ENCODE measurements at regions of chr12 and their contacts with region 1.

Region 1: DNA sequence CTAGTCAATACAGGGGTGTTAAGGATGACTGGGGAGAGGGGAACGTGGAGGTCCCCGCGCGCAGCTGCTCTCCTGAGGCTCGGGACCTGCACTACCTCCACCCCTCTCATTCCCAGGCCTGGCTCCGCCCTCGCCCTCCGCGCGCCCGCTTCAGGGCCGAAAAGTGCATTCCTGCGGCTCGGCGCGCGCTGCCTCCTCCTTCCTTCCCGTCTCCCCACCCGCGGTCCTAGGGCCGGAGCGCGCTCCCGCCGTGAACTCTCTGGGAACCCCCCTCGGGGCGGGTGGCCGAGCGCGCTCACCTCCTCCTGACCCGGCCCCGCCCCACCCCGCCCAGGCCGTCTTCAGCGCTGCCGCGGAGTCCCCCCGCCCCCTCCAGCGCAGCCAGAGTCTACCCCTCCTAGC is 11.2 kb downstream of the RARG start:
- DNase-seq: peak; percentile 60 to 85 (median 65)
- H3K4me3 ChIP-seq: peak overlapping the region; percentile 73 to 82
- H3K4me3 Mint-ChIP-seq: peak overlapping the region; percentile 95 to 99 (median 98)
- H3K27ac ChIP-seq: peak overlapping the region; percentile 98
- H3K27ac Mint-ChIP-seq: peak overlapping the region; percentile 93 to 99 (median 97)
- H3K4me1 ChIP-seq: peaks cover 78% of the 10 kb centered on the region
- H3K4me1 Mint-ChIP-seq: peaks cover 63 to 93% (median 72%) of the 10 kb centered on the region in 4 donors
- H3K27me3 ChIP-seq: no peaks in the 10 kb centered on the region
- H3K27me3 Mint-ChIP-seq: no peaks in the 10 kb centered on the region

Region 2: GRCh38 chr12:53200458-53201176 is 20.2 kb before region 1 on chr12:
- CTCF ChIA-PET with region 1: interaction called, 4 read pairs
- POLR2A ChIA-PET with region 1: interaction called, 175 read pairs
- intact Hi-C with region 1: no loop called
- DNase-seq: no peak
- H3K4me3 ChIP-seq: peak overlapping the region; percentile 12 to 29
- H3K4me3 Mint-ChIP-seq: peak overlapping the region; percentile 66 to 89 (median 73)
- H3K27ac ChIP-seq: peak overlapping the region; percentile 41
- H3K27ac Mint-ChIP-seq: peak overlapping the region; percentile 73 to 95 (median 86)
- H3K4me1 ChIP-seq: peaks cover 95% of the 10 kb centered on the region
- H3K4me1 Mint-ChIP-seq: peaks cover 48 to 84% (median 66%) of the 10 kb centered on the region in 4 donors
- H3K27me3 ChIP-seq: no peaks in the 10 kb centered on the region
- H3K27me3 Mint-ChIP-seq: no peaks in the 10 kb centered on the region

Region 3: GRCh38 chr12:53231826-53232645 is 11.2 kb after region 1 on chr12 and contains the start of gene RARG:
- CTCF ChIA-PET with region 1: interaction called, 7 read pairs
- POLR2A ChIA-PET with region 1: interaction called, 333 read pairs
- intact Hi-C with region 1: loop called (anchors 1 kb)
- DNase-seq: peak; percentile 64 to 83 (median 67)
- H3K4me3 ChIP-seq: peak within 1 kb of the TSS; percentile 63 to 90
- H3K4me3 Mint-ChIP-seq: peak within 1 kb of the TSS; percentile 87 to 98 (median 93)
- H3K27ac ChIP-seq: peak within 1 kb of the TSS; percentile 71
- H3K27ac Mint-ChIP-seq: peak within 1 kb of the TSS; percentile 89 to 98 (median 95)
- H3K4me1 ChIP-seq: peaks cover 92% of the 10 kb centered on the region
- H3K4me1 Mint-ChIP-seq: peaks cover 55 to 89% (median 74%) of the 10 kb centered on the region in 4 donors
- H3K27me3 ChIP-seq: no peaks in the 10 kb centered on the region
- H3K27me3 Mint-ChIP-seq: no peaks in the 10 kb centered on the region
- total RNA-seq, gene RARG: 84.7 to 86.0 TPM

Region 4: DNA sequence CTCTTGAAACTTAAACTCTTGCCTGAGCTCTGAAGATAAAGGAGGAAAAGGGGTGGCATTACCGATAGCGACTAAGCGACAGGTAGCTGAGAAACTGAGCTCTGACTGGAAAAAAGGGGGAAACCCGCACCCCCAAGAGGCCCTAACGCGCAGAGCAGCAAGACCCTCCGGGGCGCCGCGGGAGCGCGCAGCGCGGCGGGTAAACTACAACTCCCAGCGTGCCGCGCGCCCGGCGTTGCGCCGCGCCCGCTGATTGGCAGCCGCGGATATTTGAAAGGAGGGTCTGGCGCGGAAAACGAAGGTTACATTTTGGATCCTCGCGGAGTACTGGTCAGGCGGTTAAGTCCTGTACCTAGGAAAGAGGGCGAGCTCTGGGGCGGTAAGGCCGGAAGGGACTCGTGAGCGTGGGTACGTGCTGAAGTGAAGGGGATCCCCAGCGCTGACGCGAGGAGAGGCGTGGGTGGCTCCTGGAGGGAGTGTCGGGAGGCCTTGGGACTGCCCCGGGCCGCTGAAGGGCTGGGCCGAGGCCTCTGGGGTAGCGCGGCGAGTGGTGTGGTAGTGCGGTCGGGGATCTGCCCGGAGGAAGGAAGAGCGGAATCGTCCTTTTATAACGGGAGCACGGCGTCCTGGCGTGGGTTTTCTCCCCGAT is 47.3 kb after region 1 on chr12 and contains the start of gene ESPL1:
- CTCF ChIA-PET with region 1: interaction called, 10 read pairs
- POLR2A ChIA-PET with region 1: interaction called, 45 read pairs
- intact Hi-C with region 1: loop called (anchors 1 kb)
- DNase-seq: peak; percentile 78 to 82 (median 81)
- H3K4me3 ChIP-seq: peak within 1 kb of the TSS; percentile 76 to 91
- H3K4me3 Mint-ChIP-seq: peak within 1 kb of the TSS; percentile 93 to 100 (median 96)
- H3K27ac ChIP-seq: peak within 1 kb of the TSS; percentile 71
- H3K27ac Mint-ChIP-seq: peak within 1 kb of the TSS; percentile 92 to 97 (median 95)
- H3K4me1 ChIP-seq: peaks cover 10% of the 10 kb centered on the region
- H3K4me1 Mint-ChIP-seq: peaks cover 11 to 29% (median 19%) of the 10 kb centered on the region in 4 donors
- H3K27me3 ChIP-seq: no peaks in the 10 kb centered on the region
- H3K27me3 Mint-ChIP-seq: no peaks in the 10 kb centered on the region
- total RNA-seq, gene ESPL1: 0.20 to 0.55 TPM